Astrocyte of the spinal cord (primary cell): ENCODE measurements at regions of chr3 and their contacts with region 1.

Region 1: GRCh38 chr3:147797095-147797494 is 387.9 kb downstream of the ZIC1 start:
- DNase-seq: no peak
- H3K4me3 ChIP-seq: no peak overlapping the region
- CTCF ChIP-seq: no peak

Region 2: DNA sequence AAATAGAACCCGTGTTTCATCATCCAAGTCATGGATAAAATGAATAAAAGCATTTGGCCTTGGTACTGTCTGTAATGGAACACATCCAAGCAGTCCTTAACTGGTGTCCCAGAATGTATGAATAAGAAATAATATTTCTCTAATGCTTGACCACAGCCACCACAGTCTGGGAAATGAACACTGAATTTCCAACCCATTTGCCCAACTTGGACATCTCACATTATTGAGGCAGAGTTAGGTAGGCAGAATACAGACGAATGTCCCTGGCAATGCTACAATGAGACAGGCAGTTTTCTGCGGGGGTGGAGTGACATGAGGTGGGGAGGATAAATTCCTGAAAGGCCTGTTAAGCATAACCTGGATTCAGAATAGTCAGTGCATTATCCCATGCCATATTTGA is 142.3 kb before region 1 on chr3:
- in situ Hi-C with region 1: no loop called
- DNase-seq: peak; percentile 80
- H3K4me3 ChIP-seq: no peak overlapping the region
- CTCF ChIP-seq: no peak

Region 3: GRCh38 chr3:147890114-147890513 is 93.0 kb after region 1 on chr3:
- in situ Hi-C with region 1: loop called (anchors 25 kb)
- DNase-seq: no peak
- H3K4me3 ChIP-seq: no peak overlapping the region
- CTCF ChIP-seq: no peak